ENCODE measurements at regions of chr1 and their contacts with region 1.

Region 1: GRCh38 chr1:48093696-48094528 is 96.7 kb upstream of the TRABD2B start:
- DNase-seq: peak; percentile 54
- H3K4me3 Mint-ChIP-seq: no peak overlapping the region
- H3K27ac Mint-ChIP-seq: no peak overlapping the region
- H3K4me1 Mint-ChIP-seq: no peaks in the 10 kb centered on the region
- H3K27me3 Mint-ChIP-seq: peaks cover 27% of the 10 kb centered on the region

Region 2: DNA sequence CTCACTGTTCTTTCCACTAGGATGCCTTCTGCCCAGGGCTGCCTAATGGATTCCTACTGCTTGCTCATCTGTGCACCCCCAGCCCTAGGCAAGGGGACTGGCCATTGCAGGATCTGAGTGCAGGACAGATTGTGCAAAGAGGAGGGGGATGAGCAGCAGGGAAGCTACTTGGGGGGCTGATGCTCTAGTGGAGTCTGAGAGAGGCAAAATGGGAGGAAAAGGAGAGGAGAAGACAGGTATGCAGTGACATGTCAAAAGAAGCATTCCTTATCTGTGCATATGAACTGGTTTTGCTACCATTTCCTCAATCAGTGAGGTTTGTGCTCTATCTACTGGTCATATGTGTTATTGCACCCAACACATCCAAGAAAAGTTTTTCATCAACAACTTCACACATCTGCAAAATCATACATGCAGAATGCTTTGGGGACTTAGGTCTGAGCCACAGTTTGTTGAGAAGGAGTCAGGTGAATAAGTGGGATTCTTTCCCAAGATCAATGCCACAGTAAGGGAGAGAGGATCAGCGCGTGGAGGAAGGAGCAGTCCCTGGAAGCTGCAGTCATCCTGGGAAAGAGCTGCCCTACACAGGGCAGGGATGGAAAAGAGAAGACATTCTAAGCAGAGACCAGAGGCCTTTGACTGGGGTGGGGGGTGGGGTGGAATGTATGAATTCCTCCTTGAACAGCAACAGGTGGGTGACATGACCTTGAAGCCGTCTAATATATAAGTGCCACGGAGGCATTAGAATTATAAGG is 143.0 kb after region 1 on chr1:
- intact Hi-C with region 1: loop called (anchors 2 kb)
- DNase-seq: no peak
- H3K4me3 Mint-ChIP-seq: no peak overlapping the region
- H3K27ac Mint-ChIP-seq: no peak overlapping the region
- H3K4me1 Mint-ChIP-seq: no peaks in the 10 kb centered on the region
- H3K27me3 Mint-ChIP-seq: peaks cover 4% of the 10 kb centered on the region

Region 3: DNA sequence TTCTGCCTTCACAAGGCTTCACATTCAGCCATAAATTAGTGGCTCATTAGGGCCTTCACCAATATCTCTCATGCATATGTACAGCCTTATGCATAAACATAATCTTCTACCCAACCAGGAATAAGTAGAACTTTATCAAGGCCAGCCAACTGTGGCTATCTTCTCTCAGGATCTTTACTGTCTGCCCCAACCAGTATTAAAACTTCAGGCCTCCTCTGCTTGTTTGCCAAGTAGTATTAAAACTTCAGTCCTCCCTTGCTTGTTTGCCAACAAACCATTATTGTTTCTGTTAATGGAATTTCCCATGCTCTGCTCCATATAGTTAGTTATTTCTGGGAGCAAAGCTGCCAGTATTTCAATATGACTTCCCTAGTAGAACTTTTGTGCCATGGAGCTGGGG is 208.7 kb after region 1 on chr1:
- intact Hi-C with region 1: no loop called
- DNase-seq: no peak
- H3K4me3 Mint-ChIP-seq: no peak overlapping the region
- H3K27ac Mint-ChIP-seq: no peak overlapping the region
- H3K4me1 Mint-ChIP-seq: no peaks in the 10 kb centered on the region
- H3K27me3 Mint-ChIP-seq: no peaks in the 10 kb centered on the region

Measured in activated T-helper 1 cell treated with anti-CD3 and anti-CD28 coated beads, Interleukin-12 subunit alpha, Interleukin-12 subunit beta, Interleukin-2, Interleukin-4 antibody, amounts not matched to agents 30 ng/mL and 10 ng/mL and 1 ng/mL, durations not matched to agents 14 hours and 24 hours and 36 hours (primary cell).